GM12878 (cell line): ENCODE measurements at regions of chr17 and their contacts with region 1.

Region 1: DNA sequence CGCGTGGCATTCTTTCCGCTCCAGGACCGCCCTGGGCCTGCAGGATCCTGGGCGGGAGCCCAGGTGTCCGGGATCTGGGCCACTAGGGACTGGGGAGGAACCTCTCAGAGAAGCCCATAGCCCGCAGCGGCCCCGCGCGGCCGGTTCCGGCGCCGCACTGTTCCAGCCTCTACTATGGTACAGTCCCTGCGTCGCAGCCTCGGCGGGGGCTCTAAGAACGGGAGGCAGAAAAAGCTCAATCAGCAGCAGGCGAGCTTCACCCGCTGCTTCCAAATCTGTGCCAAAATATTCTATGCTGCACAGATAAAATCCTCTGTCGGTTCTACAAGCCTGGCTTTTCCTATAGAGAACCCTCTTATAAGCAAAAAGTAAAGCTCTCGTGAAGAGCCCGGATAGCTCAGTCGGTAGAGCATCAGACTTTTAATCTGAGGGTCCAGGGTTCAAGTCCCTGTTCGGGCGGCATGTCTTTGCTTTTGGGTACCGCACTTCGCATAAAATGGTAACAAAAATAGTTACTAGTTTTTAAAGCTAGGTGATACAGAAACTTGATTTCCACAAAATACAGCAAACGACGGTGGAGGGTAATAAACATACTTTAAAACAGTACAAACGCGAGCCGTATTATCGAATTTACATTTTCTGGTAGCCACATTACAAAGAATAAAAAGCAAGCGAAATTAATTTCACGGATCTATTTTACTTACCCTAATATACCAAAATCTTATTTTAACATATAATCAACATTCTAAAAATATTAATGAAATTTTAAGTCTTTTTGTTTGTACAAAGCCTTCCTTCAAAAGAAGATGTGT is 661 bp upstream of the ALOXE3 start:
- DNase-seq: peak; percentile 57
- ATAC-seq: peak; percentile 70
- H3K4me3 ChIP-seq: peak overlapping the region; percentile 86
- H3K27ac ChIP-seq: peak overlapping the region; percentile 12; the same call in 1 of the 2 replicates
- H3K4me1 ChIP-seq: peaks cover 26% of the 10 kb centered on the region
- H3K27me3 ChIP-seq: peaks cover 3 to 9% of the 10 kb centered on the region in 2 experiments; a peak in 3 of 4 replicates
- CTCF ChIP-seq: peak; percentile 85 to 94 (median 93)
- EP300 ChIP-seq: peak in 1 of 2 experiments; percentile 82; a peak in 1 of 4 replicates
- POLR2A ChIP-seq: no peak
- RAD21 ChIP-seq: peak; percentile 46

Region 2: DNA sequence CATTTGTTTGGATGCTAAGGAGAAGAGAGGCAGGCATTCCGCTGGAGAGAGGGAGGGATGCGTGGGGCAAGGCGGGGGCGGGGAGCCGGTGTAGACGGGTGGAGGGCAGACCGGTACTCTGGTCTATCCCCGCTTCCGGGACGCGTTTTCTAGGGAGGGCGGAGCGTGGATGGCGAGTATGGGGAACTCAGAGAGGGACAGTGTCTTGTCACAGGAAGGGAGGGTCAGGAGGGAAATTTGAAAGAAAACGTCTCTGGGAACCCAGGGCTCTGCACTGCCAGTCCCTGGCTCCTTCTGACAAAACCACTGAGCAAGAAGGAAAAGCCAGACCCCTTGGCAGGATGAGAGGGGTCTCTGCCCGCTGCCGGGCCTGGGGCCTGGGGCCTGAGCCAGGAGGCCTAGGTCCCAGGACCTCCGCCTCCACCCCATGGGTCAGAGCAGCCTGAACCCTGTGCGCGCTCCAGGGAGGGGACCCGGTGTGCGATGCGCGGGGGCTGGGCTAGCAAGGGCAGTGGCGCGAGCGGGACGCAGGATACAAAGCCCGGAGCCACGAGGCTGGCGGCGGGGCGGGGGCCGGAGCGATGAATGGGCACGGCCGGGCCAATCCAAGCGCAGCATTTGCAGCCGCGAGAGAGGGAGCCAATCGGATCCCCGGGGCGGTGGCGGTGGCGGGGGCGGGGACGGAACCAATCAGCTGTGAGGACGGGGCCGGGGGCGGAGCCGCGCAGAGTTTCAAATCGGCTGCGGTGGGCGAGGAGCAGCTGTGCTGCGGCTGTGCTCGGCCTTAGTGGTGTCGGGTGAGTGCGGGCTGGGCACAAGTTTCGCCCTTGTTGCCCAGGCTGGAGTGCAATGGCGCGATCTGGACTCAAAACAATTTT is 1675.0 kb before region 1 on chr17 and contains the start of gene PIMREG:
- CTCF ChIA-PET with region 1: no interaction called
- POLR2A ChIA-PET with region 1: no interaction called
- RAD21 ChIA-PET with region 1: no interaction called
- SMC1A ChIA-PET with region 1: no interaction called
- in situ Hi-C with region 1: no loop called
- intact Hi-C with region 1: no loop called
- DNase-seq: peak; percentile 59
- ATAC-seq: peak; percentile 98
- H3K4me3 ChIP-seq: peak within 1 kb of the TSS; percentile 75
- H3K27ac ChIP-seq: peak within 1 kb of the TSS; percentile 43
- H3K4me1 ChIP-seq: peaks cover 4% of the 10 kb centered on the region; the same call in 1 of the 2 replicates
- H3K27me3 ChIP-seq: no peaks in the 10 kb centered on the region
- CTCF ChIP-seq: no peak
- EP300 ChIP-seq: no peak
- POLR2A ChIP-seq: peak; percentile 94
- RAD21 ChIP-seq: no peak
- polyA plus RNA-seq, gene PIMREG: 2.8 to 12.1 TPM

Region 3: GRCh38 chr17:7972131-7972785 is 146.7 kb before region 1 on chr17:
- CTCF ChIA-PET with region 1: no interaction called
- POLR2A ChIA-PET with region 1: no interaction called
- RAD21 ChIA-PET with region 1: no interaction called
- SMC1A ChIA-PET with region 1: no interaction called
- in situ Hi-C with region 1: no loop called
- intact Hi-C with region 1: no loop called
- DNase-seq: no peak
- ATAC-seq: no peak
- H3K4me3 ChIP-seq: no peak overlapping the region
- H3K27ac ChIP-seq: no peak overlapping the region
- H3K4me1 ChIP-seq: no peaks in the 10 kb centered on the region
- H3K27me3 ChIP-seq: no peaks in the 10 kb centered on the region
- CTCF ChIP-seq: no peak
- EP300 ChIP-seq: no peak
- POLR2A ChIP-seq: no peak
- RAD21 ChIP-seq: no peak

Region 4: GRCh38 chr17:8073627-8074484 is 45.1 kb before region 1 on chr17:
- CTCF ChIA-PET with region 1: interaction called, 116 read pairs
- POLR2A ChIA-PET with region 1: interaction called, 6 read pairs
- RAD21 ChIA-PET with region 1: interaction called, 20 read pairs
- SMC1A ChIA-PET with region 1: interaction called, 15 read pairs
- in situ Hi-C with region 1: loop called (anchors 5 kb)
- intact Hi-C with region 1: no loop called
- DNase-seq: no peak
- ATAC-seq: peak; percentile 97
- H3K4me3 ChIP-seq: no peak overlapping the region
- H3K27ac ChIP-seq: no peak overlapping the region
- H3K4me1 ChIP-seq: no peaks in the 10 kb centered on the region
- H3K27me3 ChIP-seq: peaks cover 8 to 20% of the 10 kb centered on the region in 2 experiments
- CTCF ChIP-seq: peak; percentile 86 to 95 (median 93)
- EP300 ChIP-seq: no peak
- POLR2A ChIP-seq: no peak
- RAD21 ChIP-seq: no peak

Region 5: DNA sequence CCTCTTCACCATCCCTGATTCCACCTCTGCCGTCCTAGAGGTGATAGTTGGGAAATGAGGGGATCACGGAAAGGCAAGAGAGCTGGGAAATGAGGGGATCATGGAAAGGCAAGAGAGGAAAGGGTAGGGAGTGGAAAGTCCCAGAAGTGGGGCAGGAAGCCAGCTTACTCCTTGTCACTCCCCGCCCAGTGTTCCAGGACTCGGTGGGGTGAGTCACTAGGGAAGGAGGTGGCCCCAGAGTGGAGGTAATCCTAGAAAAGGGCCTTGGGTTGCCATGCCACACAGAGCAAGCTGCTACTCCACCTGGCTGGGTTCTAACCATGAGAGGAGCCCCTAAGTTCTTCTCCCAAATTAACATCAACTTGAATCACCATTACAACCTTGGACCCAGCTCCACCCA is 15.4 kb before region 1 on chr17:
- CTCF ChIA-PET with region 1: interaction called, 20 read pairs
- POLR2A ChIA-PET with region 1: interaction called, 5 read pairs
- RAD21 ChIA-PET with region 1: interaction called, 3 read pairs
- SMC1A ChIA-PET with region 1: interaction called, 6 read pairs
- in situ Hi-C with region 1: no loop called
- intact Hi-C with region 1: no loop called
- DNase-seq: no peak
- ATAC-seq: no peak
- H3K4me3 ChIP-seq: no peak overlapping the region
- H3K27ac ChIP-seq: no peak overlapping the region
- H3K4me1 ChIP-seq: no peaks in the 10 kb centered on the region; the same call in 1 of the 2 replicates
- H3K27me3 ChIP-seq: no peaks in the 10 kb centered on the region
- CTCF ChIP-seq: no peak
- EP300 ChIP-seq: no peak
- POLR2A ChIP-seq: no peak
- RAD21 ChIP-seq: no peak

Region 6: GRCh38 chr17:8151123-8151640 is 32.2 kb after region 1 on chr17:
- CTCF ChIA-PET with region 1: interaction called, 46 read pairs
- POLR2A ChIA-PET with region 1: interaction called, 28 read pairs
- RAD21 ChIA-PET with region 1: interaction called, 11 read pairs
- SMC1A ChIA-PET with region 1: interaction called, 23 read pairs
- in situ Hi-C with region 1: no loop called
- intact Hi-C with region 1: loop called (anchors 1 kb)
- DNase-seq: no peak
- ATAC-seq: peak; percentile 75
- H3K4me3 ChIP-seq: peak overlapping the region; percentile 89
- H3K27ac ChIP-seq: peak overlapping the region; percentile 89
- H3K4me1 ChIP-seq: peaks cover 19% of the 10 kb centered on the region
- H3K27me3 ChIP-seq: no peaks in the 10 kb centered on the region
- CTCF ChIP-seq: no peak
- EP300 ChIP-seq: peak; percentile 45 to 70; a peak in 3 of 4 replicates
- POLR2A ChIP-seq: peak; percentile 69
- RAD21 ChIP-seq: no peak

Region 7: GRCh38 chr17:8173056-8173870 is 54.3 kb after region 1 on chr17:
- CTCF ChIA-PET with region 1: interaction called, 10 read pairs
- POLR2A ChIA-PET with region 1: interaction called, 19 read pairs
- RAD21 ChIA-PET with region 1: interaction called, 5 read pairs
- SMC1A ChIA-PET with region 1: interaction called, 6 read pairs
- in situ Hi-C with region 1: no loop called
- intact Hi-C with region 1: loop called (anchors 1 kb)
- DNase-seq: peak; percentile 98
- ATAC-seq: peak; percentile 86
- H3K4me3 ChIP-seq: peak overlapping the region; percentile 65
- H3K27ac ChIP-seq: peak overlapping the region; percentile 99
- H3K4me1 ChIP-seq: peaks cover 14% of the 10 kb centered on the region
- H3K27me3 ChIP-seq: no peaks in the 10 kb centered on the region
- CTCF ChIP-seq: no peak
- EP300 ChIP-seq: peak in 1 of 2 experiments; percentile 59; a peak in 2 of 4 replicates
- POLR2A ChIP-seq: peak; percentile 99
- RAD21 ChIP-seq: no peak

Region 8: GRCh38 chr17:8248751-8249607 is 130.0 kb after region 1 on chr17 and contains the start of gene PFAS:
- CTCF ChIA-PET with region 1: interaction called, 13 read pairs
- POLR2A ChIA-PET with region 1: interaction called, 6 read pairs
- RAD21 ChIA-PET with region 1: interaction called, 7 read pairs
- SMC1A ChIA-PET with region 1: interaction called, 3 read pairs
- in situ Hi-C with region 1: no loop called
- intact Hi-C with region 1: loop called (anchors 1 kb)
- DNase-seq: peak; percentile 79
- ATAC-seq: peak; percentile 64
- H3K4me3 ChIP-seq: peak within 1 kb of the TSS; percentile 100
- H3K27ac ChIP-seq: peak within 1 kb of the TSS; percentile 100
- H3K4me1 ChIP-seq: peaks cover 10% of the 10 kb centered on the region
- H3K27me3 ChIP-seq: no peaks in the 10 kb centered on the region
- CTCF ChIP-seq: no peak
- EP300 ChIP-seq: peak; percentile 30 to 57; a peak in 2 of 4 replicates
- POLR2A ChIP-seq: peak; percentile 92
- RAD21 ChIP-seq: no peak
- polyA plus RNA-seq, gene PFAS: 13.9 to 16.1 TPM